HCT116 (cell line): ENCODE measurements at regions of chr10 and their contacts with region 1.

Region 1: DNA sequence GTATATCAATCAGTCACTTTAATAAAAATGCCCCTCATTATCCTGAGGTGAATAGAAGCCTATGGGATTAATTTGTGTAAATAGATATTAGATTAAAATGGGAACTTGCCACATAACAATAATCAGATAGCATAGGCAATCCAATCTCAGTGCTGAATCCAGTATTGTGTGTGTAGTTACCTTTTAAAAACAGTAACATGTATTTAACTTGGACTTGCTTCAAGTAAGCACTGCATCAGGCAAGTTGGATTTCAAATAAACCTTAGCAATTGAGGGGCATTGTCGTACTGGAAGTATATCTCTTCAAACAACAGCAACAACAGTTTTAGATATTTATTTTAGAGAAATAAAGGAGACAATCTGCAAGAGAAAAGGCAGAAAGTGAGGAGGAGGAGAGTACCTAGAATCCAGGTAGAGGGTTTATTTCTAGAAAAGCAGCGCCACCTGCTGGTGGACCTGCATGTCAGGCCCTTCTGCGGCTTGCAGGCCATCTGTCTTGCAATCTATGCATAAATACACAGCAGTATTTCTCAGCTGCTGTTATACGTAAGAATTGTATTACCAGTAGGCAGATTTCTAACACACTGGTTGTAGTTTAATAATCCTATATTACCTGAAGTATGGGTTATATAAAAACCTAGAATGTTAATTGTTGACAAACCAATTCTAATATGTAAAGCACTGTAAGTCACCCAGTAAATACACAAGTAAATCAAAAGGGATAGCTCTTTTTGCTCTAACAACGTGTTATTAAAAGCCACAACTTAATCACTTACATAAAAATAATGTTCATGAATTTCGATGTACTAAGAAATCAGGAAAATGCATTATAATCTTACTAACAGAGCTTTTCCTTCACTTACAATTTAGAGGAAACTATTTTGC is 652.8 kb downstream of the KCNMA1 start:
- DNase-seq: peak; percentile 63
- ATAC-seq: peak; percentile 93
- H3K4me3 ChIP-seq: no peak overlapping the region
- H3K27ac ChIP-seq: no peak overlapping the region
- H3K4me1 ChIP-seq: no peaks in the 10 kb centered on the region
- H3K27me3 ChIP-seq: peaks cover 65% of the 10 kb centered on the region
- CTCF ChIP-seq: peak; percentile 48 to 92 (median 87); a peak in 5 of 6 replicates
- POLR2A ChIP-seq: no peak
- RAD21 ChIP-seq: peak; percentile 71

Region 2: GRCh38 chr10:76106611-76107010 is 878.2 kb before region 1 on chr10:
- CTCF ChIA-PET with region 1: no interaction called
- POLR2A ChIA-PET with region 1: no interaction called
- RAD21 ChIA-PET with region 1: no interaction called
- intact Hi-C with region 1: loop called (anchors 1 kb)
- DNase-seq: no peak
- ATAC-seq: no peak
- H3K4me3 ChIP-seq: no peak overlapping the region
- H3K27ac ChIP-seq: no peak overlapping the region
- H3K4me1 ChIP-seq: peaks cover 14 to 26% of the 10 kb centered on the region in 2 experiments
- H3K27me3 ChIP-seq: no peaks in the 10 kb centered on the region
- CTCF ChIP-seq: no peak
- POLR2A ChIP-seq: no peak
- RAD21 ChIP-seq: no peak

Region 3: DNA sequence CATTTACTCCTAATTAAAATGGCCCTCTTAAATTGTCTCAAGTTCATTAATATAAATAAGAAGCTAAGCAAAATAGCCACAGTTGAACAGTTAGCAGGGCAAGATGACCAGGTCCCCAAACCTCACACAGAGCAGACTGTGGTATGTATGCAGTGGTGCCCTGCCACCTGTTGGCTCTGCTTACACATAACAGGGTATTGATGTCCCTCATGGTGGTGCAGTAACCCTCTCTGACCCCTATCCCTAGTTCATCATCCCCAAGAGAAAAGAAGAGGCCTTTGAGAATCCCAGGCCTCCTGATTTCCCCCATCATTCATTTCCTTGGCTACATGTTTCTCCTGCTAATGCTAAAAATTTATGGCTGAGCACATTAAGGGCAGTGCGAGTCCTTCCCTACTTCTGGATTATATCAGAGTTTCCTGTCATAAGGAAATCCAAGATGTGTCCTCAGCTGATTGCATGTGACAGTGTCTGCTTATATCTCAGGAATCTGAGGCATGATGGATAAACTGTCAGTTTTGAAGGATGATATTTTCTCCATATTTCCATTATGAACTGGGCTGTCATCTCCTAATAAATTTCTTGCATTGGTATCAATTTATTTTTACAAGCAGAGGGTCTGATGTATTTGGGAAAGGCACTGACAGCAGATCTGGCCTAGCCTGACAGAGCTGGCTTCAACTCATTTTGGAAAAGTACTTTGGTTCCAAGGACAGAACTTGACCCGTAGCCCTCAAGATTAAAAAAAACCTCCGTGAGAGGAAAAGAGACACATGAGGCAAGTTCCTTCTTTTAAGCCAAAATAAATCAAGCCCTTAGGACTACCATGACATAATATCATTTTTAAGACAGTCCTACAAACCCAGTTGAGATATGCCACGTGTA is 672.8 kb before region 1 on chr10:
- CTCF ChIA-PET with region 1: no interaction called
- POLR2A ChIA-PET with region 1: no interaction called
- RAD21 ChIA-PET with region 1: no interaction called
- intact Hi-C with region 1: loop called (anchors 10 kb)
- DNase-seq: peak; percentile 8
- ATAC-seq: peak; percentile 99
- H3K4me3 ChIP-seq: no peak overlapping the region
- H3K27ac ChIP-seq: no peak overlapping the region
- H3K4me1 ChIP-seq: no peaks in the 10 kb centered on the region
- H3K27me3 ChIP-seq: no peaks in the 10 kb centered on the region
- CTCF ChIP-seq: peak; percentile 28 to 70 (median 67); a peak in 4 of 6 replicates
- POLR2A ChIP-seq: no peak
- RAD21 ChIP-seq: peak; percentile 49

Region 4: DNA sequence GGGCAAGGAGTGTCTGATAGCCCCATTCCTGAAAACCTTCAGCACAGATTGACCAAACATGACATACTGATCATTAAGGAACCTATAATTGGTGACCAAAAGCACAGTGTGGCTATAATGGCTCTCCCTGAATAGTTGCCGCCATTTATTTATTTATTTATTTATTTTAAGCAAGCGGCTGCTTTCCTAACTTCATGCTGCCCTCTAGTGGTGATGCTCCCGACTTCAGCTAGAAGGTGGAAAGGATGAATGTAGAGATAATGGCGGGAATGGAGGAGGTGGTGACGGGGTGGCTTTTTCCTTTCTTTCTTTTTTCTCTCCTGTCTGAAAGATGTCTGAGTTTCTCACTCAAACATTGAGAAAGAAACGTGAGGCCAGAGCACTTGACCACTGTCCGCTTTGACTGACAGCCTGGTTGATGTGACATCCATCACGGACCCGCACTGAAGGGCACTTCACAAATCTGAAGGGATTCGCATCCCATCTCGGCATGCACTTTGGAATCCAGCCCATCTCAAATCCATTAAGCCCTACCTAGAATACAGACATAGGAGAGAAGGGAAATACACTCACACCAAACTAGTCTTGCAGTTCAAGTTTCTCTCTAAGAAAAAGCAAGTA is 437.3 kb before region 1 on chr10:
- CTCF ChIA-PET with region 1: no interaction called
- POLR2A ChIA-PET with region 1: no interaction called
- RAD21 ChIA-PET with region 1: no interaction called
- intact Hi-C with region 1: loop called (anchors 10 kb)
- DNase-seq: peak; percentile 64
- ATAC-seq: peak; percentile 76
- H3K4me3 ChIP-seq: no peak overlapping the region
- H3K27ac ChIP-seq: no peak overlapping the region
- H3K4me1 ChIP-seq: no peaks in the 10 kb centered on the region
- H3K27me3 ChIP-seq: peaks cover 11% of the 10 kb centered on the region; the same call in 1 of the 2 replicates
- CTCF ChIP-seq: peak; percentile 63 to 74 (median 70)
- POLR2A ChIP-seq: no peak
- RAD21 ChIP-seq: peak; percentile 74

Region 5: GRCh38 chr10:76786504-76787072 is 198.2 kb before region 1 on chr10:
- CTCF ChIA-PET with region 1: no interaction called
- POLR2A ChIA-PET with region 1: no interaction called
- RAD21 ChIA-PET with region 1: no interaction called
- intact Hi-C with region 1: loop called (anchors 10 kb)
- DNase-seq: no peak
- ATAC-seq: no peak
- H3K4me3 ChIP-seq: no peak overlapping the region
- H3K27ac ChIP-seq: no peak overlapping the region
- H3K4me1 ChIP-seq: no peaks in the 10 kb centered on the region
- H3K27me3 ChIP-seq: no peaks in the 10 kb centered on the region
- CTCF ChIP-seq: no peak
- POLR2A ChIP-seq: no peak
- RAD21 ChIP-seq: no peak